ENCODE measurements at regions of chr18 and their contacts with region 1.

Region 1: DNA sequence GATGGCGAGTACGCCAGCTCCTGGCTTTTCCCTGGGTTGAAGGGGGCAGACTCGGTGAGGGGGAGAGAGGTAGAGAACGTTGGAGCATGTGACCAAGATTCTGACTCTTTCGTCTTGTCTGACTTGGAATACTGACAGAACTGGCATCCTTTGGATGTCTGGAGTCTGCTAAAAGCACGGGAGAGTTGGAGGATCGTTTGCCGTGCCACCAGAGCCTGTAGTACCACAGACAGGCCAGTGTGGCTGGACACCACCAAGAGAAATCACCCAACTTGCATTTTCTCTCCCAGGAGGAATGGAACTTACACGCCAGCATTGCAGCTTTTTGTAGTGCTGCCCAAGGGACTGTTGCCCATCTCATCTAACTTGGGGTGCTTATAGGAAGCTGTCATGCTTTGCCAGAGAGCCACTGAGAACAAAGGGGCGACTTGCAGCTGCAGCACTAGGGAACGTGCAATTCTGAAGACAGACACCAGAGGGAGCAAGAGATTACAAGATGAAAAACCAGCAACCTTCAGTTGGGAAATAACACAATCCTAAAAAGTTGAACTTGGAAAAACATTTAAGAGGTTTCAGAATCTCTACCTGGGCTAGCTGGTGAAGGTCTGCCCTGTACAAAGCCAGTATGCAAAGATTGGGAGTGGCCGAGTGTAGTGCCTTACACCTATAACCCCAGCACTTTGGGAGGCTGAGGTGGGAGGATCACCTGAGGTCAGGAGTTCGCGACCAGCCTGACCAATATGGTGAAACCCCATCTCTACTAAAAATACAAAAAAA is 24.1 kb downstream of the PSMG2 start:
- DNase-seq: peak; percentile 54
- H3K4me3 ChIP-seq: no peak overlapping the region
- H3K27ac ChIP-seq: no peak overlapping the region
- H3K4me1 ChIP-seq: peaks cover 5% of the 10 kb centered on the region
- H3K27me3 ChIP-seq: no peaks in the 10 kb centered on the region
- CTCF ChIP-seq: peak; percentile 83 to 91

Region 2: GRCh38 chr18:12686100-12686499 is 40.9 kb before region 1 on chr18:
- CTCF ChIA-PET with region 1: no interaction called
- dilution Hi-C with region 1: no loop called
- in situ Hi-C with region 1: no loop called
- intact Hi-C with region 1: loop called (anchors 1 kb)
- DNase-seq: peak; percentile 20
- H3K4me3 ChIP-seq: no peak overlapping the region
- H3K27ac ChIP-seq: no peak overlapping the region
- H3K4me1 ChIP-seq: no peaks in the 10 kb centered on the region
- H3K27me3 ChIP-seq: no peaks in the 10 kb centered on the region
- CTCF ChIP-seq: no peak

Region 3: DNA sequence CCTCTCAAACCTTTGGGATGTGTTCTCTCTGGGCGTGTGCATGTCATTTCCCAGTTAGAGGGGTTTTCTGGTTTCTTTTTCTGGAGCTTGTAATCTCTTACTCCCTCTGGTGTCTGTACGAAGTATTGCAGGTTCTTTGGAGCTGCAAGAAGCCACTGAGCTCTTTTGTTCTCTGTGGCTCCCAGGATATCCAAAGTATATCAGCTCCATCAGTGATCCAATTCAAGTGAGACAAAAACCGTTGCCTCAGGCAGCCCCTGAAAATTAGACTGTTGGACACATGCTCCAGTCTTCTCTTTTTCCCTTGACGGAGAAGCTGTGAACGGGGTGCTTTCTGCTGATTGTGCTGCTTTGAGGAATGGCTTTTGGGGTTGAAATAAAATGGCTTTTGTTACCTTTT is 432.6 kb after region 1 on chr18:
- CTCF ChIA-PET with region 1: no interaction called
- dilution Hi-C with region 1: no loop called
- in situ Hi-C with region 1: loop called (anchors 25 kb)
- intact Hi-C with region 1: loop called (anchors 5 kb)
- DNase-seq: peak; percentile 52
- H3K4me3 ChIP-seq: no peak overlapping the region
- H3K27ac ChIP-seq: no peak overlapping the region
- H3K4me1 ChIP-seq: no peaks in the 10 kb centered on the region
- H3K27me3 ChIP-seq: no peaks in the 10 kb centered on the region
- CTCF ChIP-seq: peak; percentile 74 to 79